Left colon (tissue), 2 donors: ENCODE measurements at regions of chr5 and their contacts with region 1.

Region 1: DNA sequence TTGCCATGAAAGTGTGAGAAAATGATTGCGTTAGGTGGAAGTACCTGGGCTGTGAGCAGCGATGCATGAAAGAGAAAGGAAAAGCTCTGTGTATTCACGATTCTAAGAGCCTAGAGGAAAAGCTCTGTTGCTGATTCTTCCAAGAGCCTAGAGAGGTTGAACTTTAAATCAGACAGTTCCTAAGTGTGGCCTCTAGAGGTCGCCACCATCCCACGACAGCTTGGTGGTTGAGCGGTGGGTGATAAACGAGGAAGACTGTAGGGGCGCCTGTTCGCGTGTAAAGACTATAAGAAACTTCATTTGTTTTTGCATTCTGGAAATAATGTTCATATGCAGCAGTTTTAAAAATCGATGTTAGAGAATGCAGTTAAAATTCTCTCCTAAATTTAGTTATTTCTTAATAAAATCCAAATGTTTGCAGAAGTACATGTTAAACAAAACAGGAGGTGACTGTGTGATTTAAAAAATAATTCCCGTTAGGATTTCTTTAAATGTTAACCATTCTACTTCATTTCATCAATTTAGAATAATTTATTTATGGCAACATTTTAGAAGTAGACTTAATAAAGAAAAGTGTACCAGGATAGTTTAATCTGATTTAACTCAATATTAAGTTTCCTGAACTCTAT is 107.7 kb downstream of the TENT4A start:
- DNase-seq: no peak
- ATAC-seq: peak; percentile 64

Region 2: GRCh38 chr5:6377582-6377904 is 443.4 kb before region 1 on chr5:
- intact Hi-C with region 1: no loop called
- DNase-seq: no peak
- ATAC-seq: no peak

Region 3: DNA sequence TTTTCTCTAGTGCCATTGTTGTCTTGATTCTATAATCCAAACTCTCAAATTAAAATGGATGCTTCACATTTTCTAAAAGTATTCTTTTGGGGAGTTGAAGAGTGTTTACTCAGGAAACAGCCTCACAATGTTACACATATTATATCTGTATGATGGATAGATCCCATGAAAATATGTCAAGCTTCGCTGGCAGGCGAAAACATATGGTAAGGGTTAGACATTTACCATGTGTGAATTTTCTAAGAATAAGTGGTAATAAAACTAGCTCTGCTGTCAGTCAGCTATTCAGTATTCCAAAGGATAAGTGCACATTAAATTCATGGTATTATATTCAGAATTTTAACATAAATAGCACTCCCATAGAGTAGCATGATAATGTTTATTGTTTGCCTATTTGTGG is 561.6 kb after region 1 on chr5:
- intact Hi-C with region 1: loop called in 1 of 2 experiments (anchors 10 kb)
- DNase-seq: no peak
- ATAC-seq: no peak

Region 4: GRCh38 chr5:7754992-7755596 is 934.1 kb after region 1 on chr5:
- intact Hi-C with region 1: loop called in 1 of 2 experiments (anchors 5 kb)
- DNase-seq: peak in 1 of 2 donors; percentile 52
- ATAC-seq: peak; percentile 77